MCF 10A (cell line): ENCODE measurements at regions of chr5 and their contacts with region 1.

Region 1: DNA sequence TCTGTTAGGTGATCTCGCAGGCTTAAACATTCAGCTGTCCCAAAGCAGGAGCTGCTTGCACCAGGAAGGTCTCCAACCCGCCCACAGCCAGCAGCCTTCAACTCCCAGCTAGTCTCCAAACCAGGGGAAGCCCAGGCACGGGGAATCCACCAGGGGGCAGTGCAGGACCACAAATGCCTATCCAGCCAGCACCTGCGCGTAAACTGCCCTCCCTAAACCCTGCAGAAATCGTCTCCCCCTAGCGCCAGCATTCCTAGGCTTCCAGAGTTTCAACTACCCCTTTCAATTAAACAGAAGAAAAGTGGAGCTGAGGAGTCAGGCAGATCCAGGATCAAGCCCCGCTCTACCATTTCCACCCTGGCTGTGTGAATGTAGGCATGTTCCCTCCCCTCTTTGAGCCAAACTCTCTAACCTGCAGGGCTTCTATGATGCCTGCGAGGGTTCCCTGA is 72.0 kb downstream of the HRH2 start:
- DNase-seq: peak; percentile 94
- H3K4me3 Mint-ChIP-seq: no peak overlapping the region
- H3K27ac Mint-ChIP-seq: no peak overlapping the region
- H3K4me1 Mint-ChIP-seq: peaks cover 9% of the 10 kb centered on the region
- H3K27me3 Mint-ChIP-seq: no peaks in the 10 kb centered on the region
- CTCF ChIP-seq: peak; percentile 100

Region 2: DNA sequence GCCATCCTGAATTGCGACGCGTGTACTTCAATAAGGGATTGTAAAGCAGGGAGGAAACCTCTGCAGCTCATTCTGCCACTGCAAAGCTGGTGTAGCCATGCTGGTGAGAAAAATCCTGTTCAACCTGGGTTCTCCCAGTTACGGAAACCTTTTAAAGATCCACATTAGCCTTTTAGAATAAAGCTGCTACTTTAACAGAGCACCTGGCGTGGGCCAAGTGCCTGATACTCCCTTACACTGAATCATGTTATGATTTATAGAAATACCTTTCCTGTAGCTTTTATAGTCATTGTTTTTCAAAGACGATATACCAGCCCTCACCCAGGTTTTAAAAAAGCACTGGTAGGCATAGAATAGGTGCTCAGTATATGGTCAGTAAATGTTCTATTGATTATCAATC is 203.2 kb before region 1 on chr5:
- CTCF ChIA-PET with region 1: interaction called, 10 read pairs
- POLR2A ChIA-PET with region 1: no interaction called
- intact Hi-C with region 1: no loop called
- DNase-seq: no peak
- H3K4me3 Mint-ChIP-seq: no peak overlapping the region
- H3K27ac Mint-ChIP-seq: no peak overlapping the region
- H3K4me1 Mint-ChIP-seq: no peaks in the 10 kb centered on the region
- H3K27me3 Mint-ChIP-seq: no peaks in the 10 kb centered on the region
- CTCF ChIP-seq: no peak

Region 3: DNA sequence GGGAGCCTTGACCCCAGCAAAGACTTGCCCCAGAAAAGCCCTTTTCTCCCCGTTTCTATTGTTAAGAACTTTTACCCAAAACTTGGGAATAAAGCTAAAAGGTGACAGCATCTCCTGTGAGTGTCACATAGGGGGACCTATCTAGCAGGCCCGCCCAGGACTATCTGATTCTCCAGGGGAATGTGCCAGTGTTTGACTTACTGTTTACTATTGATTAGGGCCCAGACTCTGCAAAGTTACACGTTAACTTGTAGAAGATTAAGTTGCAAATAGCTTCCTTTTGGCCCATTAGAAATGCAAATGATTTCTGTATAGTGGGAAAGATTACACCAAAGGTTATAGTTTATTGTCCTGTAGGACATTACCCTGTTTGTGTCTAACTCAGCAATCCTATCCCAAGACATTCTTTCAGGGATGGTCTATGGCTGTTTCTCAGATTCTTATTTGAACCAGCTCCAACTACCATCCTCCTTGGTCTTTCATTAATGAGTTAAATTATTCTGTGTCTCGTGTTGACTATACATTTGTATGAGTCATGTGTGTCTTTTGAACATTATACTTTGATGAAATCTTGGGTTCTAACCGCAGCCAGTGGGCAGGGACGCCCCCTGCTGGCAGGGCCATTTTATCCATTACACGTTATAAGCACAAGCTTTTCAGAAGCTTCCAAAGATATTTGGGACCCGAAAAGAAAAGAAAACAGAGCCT is 11.3 kb before region 1 on chr5:
- CTCF ChIA-PET with region 1: interaction called, 56 read pairs
- POLR2A ChIA-PET with region 1: interaction called, 3 read pairs
- intact Hi-C with region 1: no loop called
- DNase-seq: peak; percentile 55
- H3K4me3 Mint-ChIP-seq: no peak overlapping the region
- H3K27ac Mint-ChIP-seq: no peak overlapping the region
- H3K4me1 Mint-ChIP-seq: no peaks in the 10 kb centered on the region
- H3K27me3 Mint-ChIP-seq: peaks cover 38% of the 10 kb centered on the region
- CTCF ChIP-seq: peak; percentile 72

Region 4: DNA sequence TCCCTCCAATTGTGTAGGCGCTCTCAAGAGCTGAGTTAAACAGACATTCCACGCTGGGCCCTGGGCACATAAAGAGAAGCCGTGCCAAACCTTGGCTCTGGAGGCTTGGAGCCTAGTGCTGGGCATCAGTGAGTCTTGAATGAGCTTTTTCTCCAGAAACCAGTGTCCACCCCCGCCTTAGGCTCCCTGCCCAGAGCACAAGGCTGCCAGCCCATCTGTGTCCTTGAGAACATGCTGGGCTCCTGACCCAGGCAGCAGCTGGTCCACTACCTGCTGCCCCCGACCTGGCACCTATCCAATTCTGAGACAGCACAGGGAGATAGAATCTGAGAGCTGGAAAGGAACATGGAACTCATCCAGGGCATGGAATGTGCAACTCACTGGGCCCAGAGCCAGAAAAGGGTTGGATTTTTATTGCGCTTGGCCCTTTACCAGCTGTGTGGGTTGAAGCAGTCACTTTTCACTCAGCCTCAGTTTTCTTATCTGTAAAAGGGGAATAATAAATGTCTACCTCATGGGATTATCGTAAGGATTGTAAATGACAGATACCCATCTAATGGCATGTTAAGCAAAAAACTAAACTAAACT is 49.2 kb after region 1 on chr5:
- CTCF ChIA-PET with region 1: interaction called, 7 read pairs
- POLR2A ChIA-PET with region 1: no interaction called
- intact Hi-C with region 1: loop called (anchors 1 kb)
- DNase-seq: peak; percentile 99
- H3K4me3 Mint-ChIP-seq: no peak overlapping the region
- H3K27ac Mint-ChIP-seq: no peak overlapping the region
- H3K4me1 Mint-ChIP-seq: peaks cover 18% of the 10 kb centered on the region
- H3K27me3 Mint-ChIP-seq: peaks cover 21% of the 10 kb centered on the region
- CTCF ChIP-seq: no peak

Region 5: DNA sequence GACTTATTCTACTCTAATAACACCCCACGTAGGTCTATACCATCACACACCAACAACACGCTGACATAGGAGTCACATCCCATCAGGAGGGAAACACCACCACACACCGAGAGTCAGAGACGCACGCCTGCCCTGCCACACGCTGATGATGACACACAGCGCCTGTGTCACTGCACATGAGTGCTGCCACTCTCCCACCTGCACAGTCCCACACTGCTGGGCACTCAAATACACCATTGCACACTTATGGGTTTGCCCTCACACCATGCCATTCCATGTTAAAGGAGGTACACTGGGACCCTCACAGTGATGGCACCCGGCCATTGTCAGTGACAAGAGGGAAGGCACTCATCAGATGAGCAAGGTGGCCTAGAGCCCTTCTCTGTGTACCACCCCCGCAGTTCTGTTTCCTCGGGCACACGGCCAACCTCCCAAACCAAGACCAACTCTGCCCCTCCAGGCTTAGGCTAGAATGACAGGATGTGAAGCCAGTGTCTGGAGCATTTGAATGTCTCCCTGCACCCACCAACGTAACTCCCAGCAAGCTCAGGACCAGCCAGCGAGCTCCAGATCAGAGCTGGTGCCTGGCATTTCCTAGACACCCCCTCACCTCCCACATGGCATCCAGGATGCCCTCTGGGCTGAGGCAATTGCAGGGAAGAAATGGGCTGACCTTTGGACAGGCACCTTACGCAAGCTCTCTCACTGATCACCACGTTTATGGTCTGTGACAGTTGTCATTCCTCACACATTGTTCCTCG is 137.9 kb after region 1 on chr5:
- CTCF ChIA-PET with region 1: interaction called, 15 read pairs
- POLR2A ChIA-PET with region 1: no interaction called
- intact Hi-C with region 1: loop called (anchors 1 kb)
- DNase-seq: peak; percentile 66
- H3K4me3 Mint-ChIP-seq: no peak overlapping the region
- H3K27ac Mint-ChIP-seq: no peak overlapping the region
- H3K4me1 Mint-ChIP-seq: no peaks in the 10 kb centered on the region
- H3K27me3 Mint-ChIP-seq: peaks cover 66% of the 10 kb centered on the region
- CTCF ChIP-seq: peak; percentile 48

Region 6: GRCh38 chr5:175895215-175896102 is 165.6 kb after region 1 on chr5:
- CTCF ChIA-PET with region 1: interaction called, 20 read pairs
- POLR2A ChIA-PET with region 1: no interaction called
- intact Hi-C with region 1: no loop called
- DNase-seq: peak; percentile 21
- H3K4me3 Mint-ChIP-seq: no peak overlapping the region
- H3K27ac Mint-ChIP-seq: no peak overlapping the region
- H3K4me1 Mint-ChIP-seq: no peaks in the 10 kb centered on the region
- H3K27me3 Mint-ChIP-seq: no peaks in the 10 kb centered on the region
- CTCF ChIP-seq: no peak